A549 (cell line): ENCODE measurements at regions of chr20 and their contacts with region 1.

Region 1: GRCh38 chr20:58179432-58180099 is 48.9 kb downstream of the ANKRD60 start:
- DNase-seq: peak; percentile 48
- ATAC-seq: peak; percentile 89 to 95
- H3K4me3 ChIP-seq: peak overlapping the region; percentile 42
- H3K27ac ChIP-seq: peak overlapping the region; percentile 78 to 94
- H3K4me1 ChIP-seq: peaks cover 13% of the 10 kb centered on the region
- CTCF ChIP-seq: peak; percentile 97
- EP300 ChIP-seq: no peak
- POLR2A ChIP-seq: no peak
- RAD21 ChIP-seq: peak; percentile 91 to 99

Region 2: DNA sequence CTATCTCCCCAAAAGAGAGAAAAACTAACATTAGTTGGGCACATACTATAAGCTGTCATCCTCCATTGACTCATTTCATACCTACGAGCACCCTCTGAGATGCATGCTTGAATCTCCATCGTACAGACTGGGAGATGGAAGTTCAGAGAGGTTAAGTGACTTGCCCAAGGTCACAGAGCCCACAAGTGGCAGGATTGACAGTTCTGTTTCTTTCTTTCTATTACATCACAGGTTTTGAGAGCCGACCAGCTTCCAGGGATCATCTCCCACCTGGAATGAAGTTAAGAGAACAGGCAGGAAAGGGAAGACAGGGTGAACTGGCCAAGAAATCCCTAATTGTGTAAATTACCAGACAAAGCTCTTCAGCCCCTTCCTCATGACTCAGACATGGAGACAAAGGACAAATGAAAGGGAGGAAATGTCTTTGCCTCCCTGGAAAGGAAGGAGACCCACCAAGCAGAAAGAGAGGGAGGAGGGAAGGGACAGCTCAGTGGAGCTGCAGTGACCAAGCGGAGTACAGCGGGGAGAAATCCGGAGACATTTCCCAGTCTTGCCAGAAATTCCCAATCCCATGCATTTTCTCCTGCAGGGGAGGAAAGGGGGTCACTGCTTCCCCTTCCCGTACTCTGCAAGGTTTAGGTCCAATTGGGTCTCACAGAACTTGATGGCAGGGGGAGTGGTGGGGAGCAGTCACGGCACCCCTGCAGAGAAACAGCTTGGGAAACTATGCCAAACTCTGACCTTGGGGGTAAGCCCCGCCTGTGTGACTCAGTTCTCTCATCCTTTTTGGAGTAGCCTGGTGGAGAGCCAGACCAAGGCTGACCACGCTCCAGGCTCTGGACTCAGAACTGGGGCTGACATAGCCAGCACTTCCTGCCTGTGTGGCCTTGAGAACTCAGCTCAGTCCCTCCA is 105.4 kb before region 1 on chr20:
- CTCF ChIA-PET with region 1: no interaction called
- POLR2A ChIA-PET with region 1: no interaction called
- DNase-seq: no peak
- ATAC-seq: no peak
- H3K4me3 ChIP-seq: no peak overlapping the region
- H3K27ac ChIP-seq: peak overlapping the region in 1 of 2 experiments; percentile 56; a peak in 3 of 6 replicates
- H3K4me1 ChIP-seq: peaks cover 8% of the 10 kb centered on the region; the same call in 2 of the 3 replicates
- CTCF ChIP-seq: no peak
- EP300 ChIP-seq: no peak
- POLR2A ChIP-seq: no peak
- RAD21 ChIP-seq: no peak

Region 3: GRCh38 chr20:58155148-58155925 is 24.2 kb before region 1 on chr20:
- CTCF ChIA-PET with region 1: interaction called, 10 read pairs
- POLR2A ChIA-PET with region 1: no interaction called
- DNase-seq: no peak
- ATAC-seq: no peak
- H3K4me3 ChIP-seq: no peak overlapping the region
- H3K27ac ChIP-seq: no peak overlapping the region
- H3K4me1 ChIP-seq: no peaks in the 10 kb centered on the region
- CTCF ChIP-seq: no peak
- EP300 ChIP-seq: no peak
- POLR2A ChIP-seq: no peak
- RAD21 ChIP-seq: no peak

Region 4: DNA sequence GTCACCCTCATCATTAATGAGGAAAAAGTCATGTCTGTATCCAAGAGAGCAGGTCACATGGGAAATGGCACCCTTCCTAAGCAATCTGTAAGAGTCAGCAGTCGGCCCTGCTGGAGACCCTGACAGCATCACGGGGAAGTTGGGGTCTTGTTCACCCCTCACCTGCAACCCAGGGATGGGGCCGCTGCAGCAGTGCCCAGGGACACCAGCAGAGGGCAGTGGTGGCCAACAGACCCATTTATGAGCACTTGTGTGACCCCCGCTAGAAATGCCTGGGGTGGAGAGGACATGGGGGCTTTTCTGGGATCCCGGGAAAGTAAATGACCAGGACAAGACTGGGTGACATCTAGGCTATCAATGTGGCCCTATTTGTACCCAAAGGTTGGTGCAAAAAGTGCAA is 13.0 kb after region 1 on chr20:
- CTCF ChIA-PET with region 1: interaction called, 13 read pairs
- POLR2A ChIA-PET with region 1: no interaction called
- DNase-seq: no peak
- ATAC-seq: peak in 1 of 2 experiments; percentile 58; a peak in 2 of 6 replicates
- H3K4me3 ChIP-seq: no peak overlapping the region
- H3K27ac ChIP-seq: no peak overlapping the region
- H3K4me1 ChIP-seq: no peaks in the 10 kb centered on the region
- CTCF ChIP-seq: peak; percentile 46
- EP300 ChIP-seq: no peak
- POLR2A ChIP-seq: no peak
- RAD21 ChIP-seq: peak; percentile 44 to 45; a peak in 3 of 5 replicates